ENCODE measurements at regions of chr3 and their contacts with region 1.

Region 1: GRCh38 chr3:101963902-101964362 is 114.6 kb downstream of the NFKBIZ start:
- DNase-seq: peak; percentile 77
- H3K4me3 Mint-ChIP-seq: peak overlapping the region; percentile 27
- H3K27ac Mint-ChIP-seq: peak overlapping the region; percentile 80
- H3K4me1 Mint-ChIP-seq: peaks cover 31% of the 10 kb centered on the region
- H3K27me3 Mint-ChIP-seq: no peaks in the 10 kb centered on the region

Region 2: DNA sequence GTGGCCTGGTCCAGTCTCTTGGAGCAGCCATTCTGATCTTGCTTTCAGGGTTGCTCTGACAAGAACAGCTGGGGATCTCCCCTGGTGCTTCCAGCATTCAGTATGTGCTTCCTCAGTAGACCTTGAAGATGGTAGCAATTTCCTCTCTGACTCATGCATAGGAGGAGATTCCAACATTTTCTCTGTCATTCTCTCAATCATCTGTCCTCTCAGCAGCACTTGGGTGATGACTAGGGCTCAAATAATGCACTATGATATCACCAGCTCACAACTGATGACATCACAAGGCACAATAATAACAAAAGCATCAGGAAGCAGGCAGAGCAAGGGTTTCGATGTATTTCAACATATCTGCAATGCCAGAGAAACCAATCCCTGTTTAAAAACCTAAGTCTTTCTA is 61.9 kb before region 1 on chr3:
- CTCF ChIA-PET with region 1: no interaction called
- intact Hi-C with region 1: loop called (anchors 1 kb)
- DNase-seq: peak; percentile 69
- H3K4me3 Mint-ChIP-seq: no peak overlapping the region
- H3K27ac Mint-ChIP-seq: no peak overlapping the region
- H3K4me1 Mint-ChIP-seq: peaks cover 17% of the 10 kb centered on the region
- H3K27me3 Mint-ChIP-seq: no peaks in the 10 kb centered on the region

Region 3: GRCh38 chr3:101943029-101943428 is 20.9 kb before region 1 on chr3:
- CTCF ChIA-PET with region 1: no interaction called
- intact Hi-C with region 1: loop called (anchors 1 kb)
- DNase-seq: no peak
- H3K4me3 Mint-ChIP-seq: no peak overlapping the region
- H3K27ac Mint-ChIP-seq: no peak overlapping the region
- H3K4me1 Mint-ChIP-seq: peaks cover 38% of the 10 kb centered on the region
- H3K27me3 Mint-ChIP-seq: no peaks in the 10 kb centered on the region

Region 4: GRCh38 chr3:101988591-101988990 is 24.7 kb after region 1 on chr3:
- CTCF ChIA-PET with region 1: no interaction called
- intact Hi-C with region 1: loop called (anchors 1 kb)
- DNase-seq: peak; percentile 31
- H3K4me3 Mint-ChIP-seq: no peak overlapping the region
- H3K27ac Mint-ChIP-seq: no peak overlapping the region
- H3K4me1 Mint-ChIP-seq: peaks cover 21% of the 10 kb centered on the region
- H3K27me3 Mint-ChIP-seq: no peaks in the 10 kb centered on the region

Region 5: GRCh38 chr3:102024270-102024904 is 60.5 kb after region 1 on chr3:
- CTCF ChIA-PET with region 1: no interaction called
- intact Hi-C with region 1: loop called (anchors 1 kb)
- DNase-seq: peak; percentile 68
- H3K4me3 Mint-ChIP-seq: no peak overlapping the region
- H3K27ac Mint-ChIP-seq: no peak overlapping the region
- H3K4me1 Mint-ChIP-seq: peaks cover 27% of the 10 kb centered on the region
- H3K27me3 Mint-ChIP-seq: no peaks in the 10 kb centered on the region

Region 6: GRCh38 chr3:102053375-102053989 is 89.5 kb after region 1 on chr3:
- CTCF ChIA-PET with region 1: no interaction called
- intact Hi-C with region 1: loop called (anchors 1 kb)
- DNase-seq: peak; percentile 56
- H3K4me3 Mint-ChIP-seq: no peak overlapping the region
- H3K27ac Mint-ChIP-seq: no peak overlapping the region
- H3K4me1 Mint-ChIP-seq: peaks cover 33% of the 10 kb centered on the region
- H3K27me3 Mint-ChIP-seq: no peaks in the 10 kb centered on the region